HEK293 (cell line): ENCODE measurements at regions of chr3 and their contacts with region 1.

Region 1: DNA sequence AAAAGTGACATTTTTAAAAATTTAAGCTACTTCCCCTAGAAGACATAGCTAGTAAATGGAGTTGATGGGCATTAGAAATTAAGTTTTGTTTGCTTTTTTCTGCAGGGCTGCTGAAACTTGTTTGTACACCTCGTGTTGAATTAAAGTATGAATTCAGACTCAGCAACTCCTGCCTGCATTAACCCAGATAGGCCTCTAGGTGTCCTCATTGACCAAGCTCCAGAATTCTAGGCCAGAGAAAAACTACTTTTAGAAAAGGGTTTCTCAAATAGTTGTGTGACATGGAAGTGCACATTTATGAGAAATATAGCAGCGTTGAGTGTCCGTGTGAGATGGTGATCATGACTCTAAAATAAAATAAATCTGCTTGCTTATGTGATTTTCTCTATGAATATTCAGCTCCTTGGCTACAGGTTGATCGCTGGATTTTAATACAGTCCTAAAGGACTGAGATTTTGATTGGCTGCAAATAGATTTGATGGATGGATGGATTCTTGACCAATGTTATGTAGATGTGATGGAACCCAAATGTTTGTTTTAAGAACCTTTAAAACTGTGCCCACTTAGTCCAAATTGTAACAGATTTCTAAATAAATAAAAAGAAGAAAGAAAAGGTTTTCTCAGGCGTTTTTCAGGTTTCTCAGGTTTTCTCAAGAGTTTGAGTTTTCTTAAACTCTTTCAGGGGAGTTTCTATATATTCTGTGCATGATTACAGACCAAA is 39.4 kb upstream of the LMOD3 start:
- H3K4me3 ChIP-seq: no peak overlapping the region
- H3K27ac ChIP-seq: no peak overlapping the region
- H3K4me1 ChIP-seq: no peaks in the 10 kb centered on the region
- CTCF ChIP-seq: peak; percentile 49

Region 2: DNA sequence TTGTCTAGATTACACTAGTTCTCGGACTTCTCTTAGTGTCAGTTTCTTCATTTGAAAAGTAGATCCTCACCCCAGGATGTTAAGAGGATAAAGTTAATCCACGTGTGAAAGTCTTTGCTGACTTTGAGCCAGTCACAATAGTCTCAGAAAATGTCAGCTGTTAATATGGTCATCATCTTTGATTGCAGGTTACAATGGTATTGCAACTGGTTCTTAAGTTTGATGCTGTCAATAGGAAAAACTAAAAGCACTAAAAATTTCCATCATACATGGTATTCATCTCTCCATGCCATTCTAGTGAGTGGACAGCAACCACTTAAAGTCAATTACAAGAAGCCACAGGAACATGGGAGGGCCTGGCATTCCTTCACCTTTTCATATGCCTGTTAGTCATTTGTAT is 421.7 kb before region 1 on chr3:
- CTCF ChIA-PET with region 1: no interaction called
- POLR2A ChIA-PET with region 1: no interaction called
- H3K4me3 ChIP-seq: no peak overlapping the region
- H3K27ac ChIP-seq: no peak overlapping the region
- H3K4me1 ChIP-seq: no peaks in the 10 kb centered on the region
- CTCF ChIP-seq: no peak

Region 3: DNA sequence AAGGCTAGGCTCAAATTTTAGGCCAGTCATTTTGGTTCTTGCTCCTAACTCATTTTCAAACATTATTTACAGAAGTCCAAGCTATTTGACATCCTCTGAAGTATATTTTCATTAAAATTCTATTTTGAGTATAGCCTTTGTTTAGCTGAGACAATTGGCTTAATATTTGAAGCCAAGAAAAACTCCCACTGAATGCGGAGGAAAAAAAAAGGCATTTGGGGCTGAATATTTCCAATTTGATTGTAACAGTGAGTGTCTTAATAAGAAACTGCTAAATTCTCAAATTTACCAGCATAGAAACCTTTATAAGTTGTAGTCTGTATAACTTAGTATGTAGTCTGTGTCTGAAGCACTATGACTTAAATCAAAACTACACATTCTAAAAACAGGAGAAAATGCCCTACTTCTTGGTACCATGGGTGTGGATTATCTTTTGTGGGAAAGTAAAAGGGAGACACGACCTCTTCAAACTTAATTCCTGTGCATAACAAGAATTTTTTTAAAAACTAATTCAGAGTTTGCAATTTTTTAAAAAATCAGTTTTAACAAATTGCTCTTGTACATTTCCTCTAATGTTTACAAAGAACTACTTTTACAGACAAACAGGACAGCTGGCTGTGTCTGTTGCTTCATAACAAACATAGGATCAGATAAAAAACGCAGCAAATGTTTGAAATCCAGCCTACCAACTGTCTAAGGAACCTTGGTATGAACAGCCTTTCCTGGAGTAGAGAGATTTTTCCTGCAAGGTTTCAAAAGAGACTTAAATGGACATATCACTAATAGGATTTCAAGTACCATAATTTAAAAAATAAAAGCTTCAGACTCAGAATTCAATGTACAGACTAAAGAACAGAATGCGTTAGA is 13.4 kb after region 1 on chr3:
- CTCF ChIA-PET with region 1: interaction called, 12 read pairs
- POLR2A ChIA-PET with region 1: no interaction called
- H3K4me3 ChIP-seq: no peak overlapping the region
- H3K27ac ChIP-seq: no peak overlapping the region
- H3K4me1 ChIP-seq: peaks cover 8% of the 10 kb centered on the region
- CTCF ChIP-seq: no peak

Region 4: GRCh38 chr3:69299361-69299760 is 137.6 kb after region 1 on chr3:
- CTCF ChIA-PET with region 1: interaction called, 173 read pairs
- POLR2A ChIA-PET with region 1: no interaction called
- H3K4me3 ChIP-seq: no peak overlapping the region
- H3K27ac ChIP-seq: no peak overlapping the region
- H3K4me1 ChIP-seq: no peaks in the 10 kb centered on the region
- CTCF ChIP-seq: no peak

Region 5: DNA sequence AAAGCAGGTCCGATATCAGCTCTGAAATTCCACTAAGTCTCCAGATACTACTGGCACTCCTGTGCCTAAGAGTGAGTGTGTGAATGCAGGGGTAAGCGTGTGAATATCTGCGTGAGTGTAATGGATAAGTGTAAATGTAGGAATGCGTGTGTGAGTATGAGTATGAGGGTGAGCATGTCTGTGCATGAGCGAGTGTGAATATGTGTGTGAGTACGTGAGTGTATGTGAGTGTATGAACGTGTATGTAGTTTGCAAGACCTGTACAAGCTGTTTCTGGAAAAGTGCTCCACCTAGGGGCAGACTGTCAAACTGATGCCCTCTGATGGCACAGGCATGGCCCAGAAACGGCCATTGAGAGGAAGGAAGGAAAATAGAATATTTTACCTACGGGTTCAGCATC is 248.5 kb after region 1 on chr3:
- CTCF ChIA-PET with region 1: interaction called, 17 read pairs
- POLR2A ChIA-PET with region 1: no interaction called
- H3K4me3 ChIP-seq: no peak overlapping the region
- H3K27ac ChIP-seq: no peak overlapping the region
- H3K4me1 ChIP-seq: no peaks in the 10 kb centered on the region
- CTCF ChIP-seq: peak; percentile 55

Region 6: DNA sequence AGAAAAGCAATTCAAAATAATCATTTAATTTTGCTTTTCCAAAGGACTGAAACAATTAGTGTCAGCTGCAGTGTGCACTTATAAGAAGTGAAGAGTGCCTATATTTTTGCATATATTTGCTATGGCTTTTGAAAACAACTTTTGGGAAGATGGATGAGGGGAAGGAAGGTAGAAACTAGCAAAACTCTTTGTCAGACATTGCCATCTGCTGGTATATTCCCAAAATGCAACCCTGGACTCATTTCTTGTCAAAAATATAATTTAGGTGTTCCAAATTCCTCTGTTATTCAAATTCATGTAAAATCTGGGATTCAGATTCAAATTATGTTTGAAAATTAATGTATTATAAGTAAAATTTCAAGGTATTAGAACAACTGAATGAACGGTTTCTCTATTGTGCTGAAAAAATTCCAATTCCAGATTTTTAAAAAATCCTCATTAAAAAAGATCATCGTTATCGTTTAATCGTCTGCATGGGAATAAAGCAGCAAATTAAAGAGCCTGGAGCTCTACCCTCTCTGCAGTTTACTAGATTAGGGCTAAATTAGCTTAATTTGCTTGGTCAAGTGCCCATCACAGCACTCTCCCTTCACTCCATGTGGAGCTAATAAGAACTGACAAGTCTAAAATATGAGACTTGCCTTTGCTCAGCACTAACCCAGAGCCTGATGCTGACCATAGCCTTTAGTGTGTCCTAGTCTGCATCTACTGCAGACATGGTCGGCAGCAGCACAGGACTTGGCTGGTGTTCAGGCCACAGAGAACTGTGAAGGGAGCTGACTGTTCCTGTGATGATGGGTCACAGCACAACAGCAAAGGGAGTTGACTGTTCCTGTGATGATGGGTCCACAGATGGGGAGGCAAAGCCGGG is 509.6 kb after region 1 on chr3:
- CTCF ChIA-PET with region 1: interaction called, 30 read pairs
- POLR2A ChIA-PET with region 1: no interaction called
- H3K4me3 ChIP-seq: no peak overlapping the region
- H3K27ac ChIP-seq: no peak overlapping the region
- H3K4me1 ChIP-seq: no peaks in the 10 kb centered on the region
- CTCF ChIP-seq: no peak